Breast epithelium (tissue), 4 donors: ENCODE measurements at regions of chr20 and their contacts with region 1.

Region 1: DNA sequence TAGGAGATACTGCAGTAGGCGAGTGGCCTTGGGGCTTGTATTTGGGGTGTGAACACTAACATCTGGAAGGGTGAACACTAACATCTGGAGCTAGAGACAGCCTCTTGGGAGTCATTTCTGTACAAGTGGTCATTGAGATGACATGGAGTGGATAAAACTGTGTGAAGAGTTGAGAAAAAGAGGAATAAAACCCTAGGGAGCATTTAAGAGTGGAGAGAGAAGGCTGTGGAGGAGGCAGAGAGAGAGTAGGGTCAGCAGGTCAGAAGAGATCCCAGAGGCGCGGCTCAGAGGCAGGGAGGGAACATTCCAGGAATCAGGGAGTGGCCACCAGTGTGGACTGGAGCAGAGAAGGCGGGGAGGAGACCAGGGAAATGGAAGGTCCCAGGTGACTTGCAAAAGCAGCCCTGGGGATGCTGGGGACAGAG is 202.0 kb upstream of the RNF24 start:
- DNase-seq: no peak
- H3K4me3 ChIP-seq: no peak overlapping the region
- H3K27ac ChIP-seq: no peak overlapping the region
- H3K4me1 ChIP-seq: no peaks in the 10 kb centered on the region
- H3K27me3 ChIP-seq: peaks cover 5 to 7% of the 10 kb centered on the region in 2 donors
- CTCF ChIP-seq: no peak
- POLR2A ChIP-seq: no peak

Region 2: DNA sequence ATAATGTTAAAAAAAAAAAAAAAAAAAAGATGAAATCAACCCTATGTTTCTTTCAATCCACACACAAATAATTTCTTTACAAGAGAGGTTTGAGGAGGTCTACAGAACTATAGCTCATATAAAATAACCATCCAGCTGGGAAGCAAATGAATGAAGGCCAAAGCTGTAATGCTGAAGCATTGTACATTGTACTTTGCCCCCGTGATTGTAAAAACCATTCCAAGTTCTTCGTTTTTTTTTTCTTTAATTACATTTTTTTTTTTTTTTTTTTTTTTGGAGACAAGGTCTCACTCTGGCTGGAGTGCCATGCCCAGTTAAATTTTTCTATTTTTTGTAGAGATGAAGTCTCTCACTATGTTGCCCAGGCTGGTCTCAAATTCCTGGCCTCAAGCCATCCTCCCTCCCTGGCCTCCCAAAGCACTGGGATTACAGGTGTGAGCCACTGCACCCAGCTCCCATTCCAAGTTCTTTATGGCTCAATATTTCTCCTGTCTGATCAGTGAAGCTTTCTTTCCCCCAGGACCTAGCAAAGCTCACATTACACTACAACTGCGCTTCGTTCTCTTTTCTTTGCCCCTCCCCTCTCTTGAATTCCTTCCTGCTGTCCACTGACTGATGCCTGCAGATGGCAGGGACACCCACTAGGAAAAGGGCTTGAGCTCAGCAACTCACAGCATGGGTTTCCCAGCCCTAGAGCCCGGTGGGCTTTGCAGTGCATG is 1617.9 kb before region 1 on chr20:
- intact Hi-C with region 1: loop called (anchors 10 kb)
- DNase-seq: no peak
- H3K4me3 ChIP-seq: no peak overlapping the region
- H3K27ac ChIP-seq: no peak overlapping the region
- H3K4me1 ChIP-seq: no peaks in the 10 kb centered on the region
- H3K27me3 ChIP-seq: no peaks in the 10 kb centered on the region
- CTCF ChIP-seq: no peak
- POLR2A ChIP-seq: no peak

Region 3: DNA sequence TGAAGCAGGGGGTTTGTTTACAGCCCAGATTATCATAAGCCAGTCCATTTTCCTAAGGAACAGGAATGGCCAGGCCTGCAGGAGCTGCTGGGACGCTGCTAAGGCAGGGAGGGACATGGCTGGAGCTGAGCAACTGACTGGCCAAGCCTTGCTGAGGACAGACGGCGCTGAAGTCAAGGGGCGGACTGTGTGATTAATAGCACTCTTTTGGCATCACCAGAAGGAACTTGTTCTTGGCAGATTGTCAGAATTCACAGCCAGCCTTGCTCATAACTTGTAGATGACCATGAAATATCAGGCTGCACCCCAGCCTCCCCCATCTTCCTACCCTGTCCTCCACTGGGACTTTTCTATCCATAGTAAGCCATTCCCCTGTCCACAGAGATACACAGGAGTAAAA is 16.8 kb after region 1 on chr20:
- intact Hi-C with region 1: no loop called
- DNase-seq: no peak
- H3K4me3 ChIP-seq: no peak overlapping the region
- H3K27ac ChIP-seq: no peak overlapping the region
- H3K4me1 ChIP-seq: no peaks in the 10 kb centered on the region
- H3K27me3 ChIP-seq: peaks cover 0 to 4% of the 10 kb centered on the region in 2 donors
- CTCF ChIP-seq: no peak
- POLR2A ChIP-seq: no peak

Region 4: GRCh38 chr20:5090191-5090590 is 872.8 kb after region 1 on chr20:
- intact Hi-C with region 1: no loop called
- DNase-seq: no peak
- H3K4me3 ChIP-seq: no peak overlapping the region
- H3K27ac ChIP-seq: no peak overlapping the region
- H3K4me1 ChIP-seq: no peaks in the 10 kb centered on the region
- H3K27me3 ChIP-seq: no peaks in the 10 kb centered on the region
- CTCF ChIP-seq: no peak
- POLR2A ChIP-seq: no peak